HCT116 (cell line): ENCODE measurements at regions of chr12 and their contacts with region 1.

Region 1: GRCh38 chr12:55926738-55927587 is 731 bp downstream of the PYM1 start:
- DNase-seq: peak; percentile 89
- ATAC-seq: peak; percentile 62
- H3K4me3 ChIP-seq: peak overlapping the region; percentile 80 to 99
- H3K27ac ChIP-seq: peak overlapping the region; percentile 97
- H3K4me1 ChIP-seq: peaks cover 23 to 61% of the 10 kb centered on the region in 2 experiments
- H3K27me3 ChIP-seq: no peaks in the 10 kb centered on the region
- CTCF ChIP-seq: peak in 2 of 3 experiments; percentile 69 to 88; a peak in 4 of 6 replicates
- POLR2A ChIP-seq: peak; percentile 20
- RAD21 ChIP-seq: no peak

Region 2: GRCh38 chr12:55829967-55830600 is 96.9 kb before region 1 on chr12:
- CTCF ChIA-PET with region 1: interaction called, 3 read pairs
- POLR2A ChIA-PET with region 1: interaction called, 21 read pairs
- RAD21 ChIA-PET with region 1: interaction called, 3 to 4 read pairs
- intact Hi-C with region 1: loop called (anchors 2 kb)
- DNase-seq: no peak
- ATAC-seq: peak; percentile 54
- H3K4me3 ChIP-seq: peak overlapping the region; percentile 93 to 97
- H3K27ac ChIP-seq: peak overlapping the region; percentile 87
- H3K4me1 ChIP-seq: peaks cover 16 to 29% of the 10 kb centered on the region in 2 experiments; a peak in 3 of 4 replicates
- H3K27me3 ChIP-seq: no peaks in the 10 kb centered on the region
- CTCF ChIP-seq: no peak
- POLR2A ChIP-seq: no peak
- RAD21 ChIP-seq: no peak

Region 3: GRCh38 chr12:56041552-56042429 is 114.8 kb after region 1 on chr12 and contains the start of gene RPS26:
- CTCF ChIA-PET with region 1: interaction called, 3 read pairs
- POLR2A ChIA-PET with region 1: no interaction called
- RAD21 ChIA-PET with region 1: no interaction called
- intact Hi-C with region 1: loop called (anchors 5 kb)
- DNase-seq: peak; percentile 100
- ATAC-seq: peak; percentile 88
- H3K4me3 ChIP-seq: peak within 1 kb of the TSS; percentile 90 to 99
- H3K27ac ChIP-seq: peak within 1 kb of the TSS; percentile 90
- H3K4me1 ChIP-seq: peaks cover 16 to 39% of the 10 kb centered on the region in 2 experiments
- H3K27me3 ChIP-seq: no peaks in the 10 kb centered on the region
- CTCF ChIP-seq: peak; percentile 39 to 75 (median 42)
- POLR2A ChIP-seq: peak; percentile 99
- RAD21 ChIP-seq: peak; percentile 81
- total RNA-seq, gene RPS26: 70.2 TPM